ENCODE measurements at regions of chr1 and their contacts with region 1.

Region 1: GRCh38 chr1:53121319-53122172 is 20.9 kb downstream of the SLC1A7 start:
- DNase-seq: no peak

Region 2: DNA sequence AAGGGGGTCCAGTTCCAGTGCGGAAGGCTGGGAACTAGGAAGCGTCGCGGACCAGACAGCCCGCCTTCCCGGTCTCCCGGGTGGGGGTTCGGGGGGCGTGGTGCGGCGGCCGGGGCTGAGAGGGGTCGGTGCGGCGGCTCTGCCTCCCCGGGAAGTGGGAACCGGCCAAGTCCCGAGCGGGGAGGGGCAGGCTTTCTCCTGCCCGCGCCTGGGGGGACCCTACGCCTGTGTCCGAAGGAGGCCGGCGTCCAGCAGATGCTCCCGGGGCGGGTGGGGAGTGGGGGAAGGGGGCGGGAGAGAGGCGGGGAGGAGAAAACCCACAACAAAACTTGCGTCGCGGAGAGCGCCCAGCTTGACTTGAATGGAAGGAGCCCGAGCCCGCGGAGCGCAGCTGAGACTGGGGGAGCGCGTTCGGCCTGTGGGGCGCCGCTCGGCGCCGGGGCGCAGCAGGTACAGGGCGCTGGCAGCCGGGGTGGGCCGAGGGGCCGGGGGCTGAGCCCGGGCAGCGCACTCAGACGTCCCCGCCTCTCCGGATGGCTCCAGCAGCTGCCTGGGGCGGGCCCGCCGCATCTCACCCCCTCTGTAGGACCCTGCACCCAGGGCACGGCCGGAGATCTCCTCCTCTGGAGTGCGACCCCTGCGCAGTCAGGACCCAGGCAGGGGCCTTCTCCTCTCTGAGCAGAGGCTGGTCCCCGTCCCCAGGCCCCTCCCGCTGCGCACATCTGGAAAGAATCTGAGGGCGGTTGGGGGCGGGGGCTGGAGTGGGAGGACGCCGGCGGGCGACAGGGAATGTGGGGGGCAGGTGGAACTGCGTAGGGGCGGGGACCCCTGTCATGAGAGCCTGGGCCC is 59.5 kb before region 1 on chr1 and contains the start of gene PODN:
- intact Hi-C with region 1: loop called (anchors 5 kb)
- DNase-seq: peak; percentile 71
- total RNA-seq, gene PODN: 19.4 TPM

Region 3: DNA sequence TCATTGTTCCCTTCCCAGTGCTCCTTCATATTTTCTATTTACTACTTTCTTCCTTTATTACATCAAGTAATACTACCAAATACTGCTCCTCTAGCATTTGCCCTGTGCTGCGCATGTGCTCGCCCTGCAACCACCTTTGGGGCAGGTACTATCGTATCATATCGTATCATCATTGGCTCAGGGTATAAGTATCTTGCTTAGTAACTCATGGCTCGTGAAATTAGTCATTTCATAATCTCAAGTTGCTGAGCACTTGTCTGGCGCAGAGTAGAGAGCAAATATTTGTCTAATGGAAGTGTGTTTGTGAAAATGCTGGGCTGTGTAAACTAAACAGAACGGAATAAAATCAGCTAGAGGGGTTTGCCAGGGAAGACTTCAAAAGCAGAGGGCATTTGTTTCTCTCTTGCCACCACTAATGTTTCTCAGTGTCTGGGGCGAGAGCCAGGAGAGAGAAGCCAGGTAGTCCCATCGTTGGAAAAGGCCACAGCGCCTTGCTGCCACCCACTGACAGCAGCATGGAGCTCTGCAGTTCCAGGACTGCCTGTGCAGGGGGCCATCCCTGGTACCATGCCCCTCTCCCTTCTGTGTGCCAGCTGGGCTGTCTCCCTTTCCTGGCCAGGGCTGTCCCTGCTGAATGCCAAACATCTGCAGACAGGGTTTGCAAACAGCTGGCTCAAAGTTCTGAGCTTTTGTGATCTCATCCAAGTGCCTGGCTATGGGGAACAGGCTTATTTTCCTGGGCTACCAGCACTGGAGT is 55.1 kb after region 1 on chr1:
- intact Hi-C with region 1: loop called (anchors 5 kb)
- DNase-seq: no peak

Measured in cardiac septum (tissue), 1 donor.